Aorta (tissue), 5 donors: ENCODE measurements at regions of chr3 and their contacts with region 1.

Region 1: DNA sequence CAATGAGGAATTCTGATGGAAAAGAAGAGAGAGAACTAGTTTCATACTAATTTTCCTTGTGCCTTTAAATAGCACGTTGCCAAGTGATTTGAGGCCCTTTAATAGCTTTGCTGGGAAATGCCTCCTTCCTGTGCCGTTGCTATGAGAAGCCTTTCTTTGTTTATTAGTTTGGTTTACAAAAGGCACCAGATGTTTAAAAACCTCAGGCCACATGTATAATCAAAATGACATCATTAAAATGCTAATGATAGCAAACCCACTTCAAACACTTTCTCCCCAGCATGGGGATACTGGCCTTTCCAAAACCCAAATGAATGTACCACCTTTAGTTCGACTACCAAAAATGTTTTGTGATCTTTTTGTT is 50.0 kb upstream of the TBC1D23 start:
- DNase-seq: no peak
- ATAC-seq: peak; percentile 45
- H3K4me3 ChIP-seq: no peak overlapping the region
- H3K27ac ChIP-seq: peak overlapping the region in 1 of 2 donors; percentile 10
- H3K4me1 ChIP-seq: peaks cover 0 to 2% of the 10 kb centered on the region in 2 donors
- H3K27me3 ChIP-seq: no peaks in the 10 kb centered on the region

Region 2: GRCh38 chr3:100175637-100176280 is 35.0 kb before region 1 on chr3:
- intact Hi-C with region 1: loop called in 1 of 2 experiments (anchors 5 kb)
- DNase-seq: no peak
- ATAC-seq: no peak
- H3K4me3 ChIP-seq: no peak overlapping the region
- H3K27ac ChIP-seq: no peak overlapping the region
- H3K4me1 ChIP-seq: no peaks in the 10 kb centered on the region
- H3K27me3 ChIP-seq: no peaks in the 10 kb centered on the region